ENCODE measurements at regions of chr4 and their contacts with region 1.

Region 1: GRCh38 chr4:112231779-112232713 is at the start of gene AP1AR:
- DNase-seq: peak; percentile 85
- ATAC-seq: peak; percentile 72
- H3K4me3 Mint-ChIP-seq: peak within 1 kb of the TSS; percentile 84
- H3K27ac Mint-ChIP-seq: peak within 1 kb of the TSS; percentile 99
- H3K4me1 Mint-ChIP-seq: peaks cover 35% of the 10 kb centered on the region
- H3K27me3 Mint-ChIP-seq: peaks cover 3% of the 10 kb centered on the region
- total RNA-seq, gene AP1AR: 10.9 to 13.0 TPM

Region 2: GRCh38 chr4:112214390-112215264 is 17.4 kb before region 1 on chr4:
- CTCF ChIA-PET with region 1: interaction called, 28 read pairs
- POLR2A ChIA-PET with region 1: no interaction called
- DNase-seq: no peak
- ATAC-seq: no peak
- H3K4me3 Mint-ChIP-seq: no peak overlapping the region
- H3K27ac Mint-ChIP-seq: no peak overlapping the region
- H3K4me1 Mint-ChIP-seq: peaks cover 5% of the 10 kb centered on the region
- H3K27me3 Mint-ChIP-seq: peaks cover 4% of the 10 kb centered on the region

Region 3: DNA sequence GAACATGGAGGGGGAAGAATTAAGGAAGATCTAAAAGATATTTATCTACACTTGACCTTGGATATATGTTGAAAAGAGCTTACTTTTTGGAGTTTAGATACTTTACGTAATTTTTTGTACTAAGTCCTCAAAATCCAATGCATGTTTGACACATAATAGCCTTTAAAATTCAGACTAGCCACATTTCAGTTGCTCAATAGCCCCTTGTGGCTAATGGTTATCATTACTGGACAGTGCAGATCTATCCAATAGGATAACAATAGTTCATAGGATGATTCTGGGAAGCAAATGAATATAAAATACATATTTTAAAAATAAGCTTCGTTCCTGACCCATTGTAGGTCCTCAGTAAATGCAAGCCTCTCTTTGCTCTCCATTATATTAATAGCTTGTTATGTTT is 13.3 kb after region 1 on chr4:
- CTCF ChIA-PET with region 1: interaction called, 32 read pairs
- POLR2A ChIA-PET with region 1: no interaction called
- DNase-seq: no peak
- ATAC-seq: no peak
- H3K4me3 Mint-ChIP-seq: no peak overlapping the region
- H3K27ac Mint-ChIP-seq: no peak overlapping the region
- H3K4me1 Mint-ChIP-seq: no peaks in the 10 kb centered on the region
- H3K27me3 Mint-ChIP-seq: no peaks in the 10 kb centered on the region